ENCODE measurements at regions of chr6 and their contacts with region 1.

Region 1: DNA sequence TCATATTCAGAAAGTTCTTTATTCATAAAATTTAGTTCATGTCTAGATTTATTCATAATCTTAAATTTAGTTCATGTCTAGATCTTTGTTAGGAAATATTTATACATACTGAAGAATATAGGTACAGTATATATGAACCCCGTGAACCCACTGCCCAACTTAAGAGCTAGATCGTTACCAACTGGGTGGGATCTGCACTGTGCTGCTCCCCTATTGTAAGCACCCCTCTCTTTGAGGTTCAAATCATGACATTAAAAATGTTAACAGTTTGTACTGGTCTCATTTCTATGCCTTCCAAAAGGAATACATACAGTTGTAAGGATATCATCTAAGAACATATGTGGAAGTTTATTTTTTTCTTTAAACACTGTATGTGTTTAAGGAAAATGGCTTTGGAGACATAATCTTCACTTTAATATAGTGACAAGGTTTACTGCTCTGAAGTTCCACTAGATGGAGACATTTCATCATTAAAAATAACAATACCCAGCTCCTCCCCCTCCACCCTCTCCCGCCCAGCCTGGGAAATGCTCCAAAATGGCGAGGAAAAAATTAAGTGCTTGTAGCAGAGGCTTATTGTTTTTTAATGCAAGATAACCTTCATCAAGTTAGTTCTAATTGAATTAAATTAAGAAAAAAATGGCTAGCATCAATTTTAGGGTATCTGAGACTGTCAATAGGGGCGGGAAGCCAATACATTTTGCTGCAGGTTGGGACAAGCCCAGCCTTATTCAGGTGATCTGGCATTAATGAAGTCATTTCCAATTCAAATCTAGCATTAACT is 104.1 kb upstream of the TRAF3IP2 start:
- DNase-seq: peak; percentile 73
- ATAC-seq: peak; percentile 81
- H3K4me3 Mint-ChIP-seq: no peak overlapping the region
- H3K27ac Mint-ChIP-seq: peak overlapping the region; percentile 88
- H3K4me1 Mint-ChIP-seq: peaks cover 58% of the 10 kb centered on the region
- H3K27me3 Mint-ChIP-seq: no peaks in the 10 kb centered on the region

Region 2: GRCh38 chr6:110270165-110270564 is 1439.6 kb before region 1 on chr6:
- CTCF ChIA-PET with region 1: no interaction called
- POLR2A ChIA-PET with region 1: no interaction called
- intact Hi-C with region 1: no loop called
- DNase-seq: no peak
- ATAC-seq: no peak
- H3K4me3 Mint-ChIP-seq: no peak overlapping the region
- H3K27ac Mint-ChIP-seq: no peak overlapping the region
- H3K4me1 Mint-ChIP-seq: no peaks in the 10 kb centered on the region
- H3K27me3 Mint-ChIP-seq: peaks cover 8% of the 10 kb centered on the region

Region 3: GRCh38 chr6:111533087-111533784 is 176.6 kb before region 1 on chr6:
- CTCF ChIA-PET with region 1: no interaction called
- POLR2A ChIA-PET with region 1: no interaction called
- intact Hi-C with region 1: no loop called
- DNase-seq: peak; percentile 70
- ATAC-seq: peak; percentile 96
- H3K4me3 Mint-ChIP-seq: no peak overlapping the region
- H3K27ac Mint-ChIP-seq: peak overlapping the region; percentile 59
- H3K4me1 Mint-ChIP-seq: peaks cover 39% of the 10 kb centered on the region
- H3K27me3 Mint-ChIP-seq: no peaks in the 10 kb centered on the region

Region 4: DNA sequence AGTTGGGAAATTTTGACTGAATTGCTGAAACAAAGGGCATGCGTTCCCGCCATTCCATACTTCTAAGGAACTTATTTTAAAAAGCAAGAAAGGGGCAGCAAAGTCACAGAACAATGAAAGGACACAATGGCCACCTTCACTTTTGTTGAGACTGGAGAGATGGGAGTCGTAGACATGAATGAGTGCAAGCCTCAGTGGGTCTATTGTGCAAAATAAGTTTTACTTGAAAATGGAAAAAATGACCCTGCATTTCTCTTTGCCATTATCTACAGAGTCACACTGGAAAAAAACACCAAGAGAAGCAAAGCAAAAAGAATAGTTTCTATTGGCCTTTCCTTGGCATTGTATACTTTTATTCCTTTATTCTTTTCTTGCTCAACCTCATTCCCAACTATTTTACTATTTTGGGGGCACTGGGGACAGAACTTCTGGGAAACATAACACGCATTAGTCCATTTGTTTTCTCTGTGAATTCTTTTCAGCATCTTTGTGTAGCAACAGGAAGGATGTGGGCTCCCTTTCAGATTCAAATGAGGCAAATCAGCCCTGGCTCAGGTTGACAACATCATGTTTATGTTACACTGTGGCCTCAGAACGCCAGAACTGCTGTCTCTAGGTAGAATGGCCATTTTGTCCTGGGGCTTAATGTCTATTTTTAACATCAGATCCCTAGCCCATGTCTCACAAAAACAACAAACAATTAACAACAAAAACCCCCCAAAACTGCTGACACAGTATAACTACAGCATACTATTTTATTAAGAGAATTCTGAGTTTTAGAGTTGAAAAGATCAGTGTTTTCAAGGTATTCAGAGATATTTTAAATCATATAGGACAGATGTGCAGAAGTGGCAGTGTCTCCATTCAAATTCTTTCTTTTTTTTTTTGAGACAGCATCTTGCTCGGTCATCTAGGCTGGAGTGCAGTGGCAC is 41.2 kb after region 1 on chr6:
- CTCF ChIA-PET with region 1: interaction called, 11 read pairs
- POLR2A ChIA-PET with region 1: no interaction called
- intact Hi-C with region 1: loop called in 1 of 2 experiments (anchors 5 kb)
- DNase-seq: peak; percentile 72
- ATAC-seq: peak; percentile 84
- H3K4me3 Mint-ChIP-seq: peak overlapping the region; percentile 52
- H3K27ac Mint-ChIP-seq: peak overlapping the region; percentile 90
- H3K4me1 Mint-ChIP-seq: peaks cover 92% of the 10 kb centered on the region
- H3K27me3 Mint-ChIP-seq: no peaks in the 10 kb centered on the region

Region 5: DNA sequence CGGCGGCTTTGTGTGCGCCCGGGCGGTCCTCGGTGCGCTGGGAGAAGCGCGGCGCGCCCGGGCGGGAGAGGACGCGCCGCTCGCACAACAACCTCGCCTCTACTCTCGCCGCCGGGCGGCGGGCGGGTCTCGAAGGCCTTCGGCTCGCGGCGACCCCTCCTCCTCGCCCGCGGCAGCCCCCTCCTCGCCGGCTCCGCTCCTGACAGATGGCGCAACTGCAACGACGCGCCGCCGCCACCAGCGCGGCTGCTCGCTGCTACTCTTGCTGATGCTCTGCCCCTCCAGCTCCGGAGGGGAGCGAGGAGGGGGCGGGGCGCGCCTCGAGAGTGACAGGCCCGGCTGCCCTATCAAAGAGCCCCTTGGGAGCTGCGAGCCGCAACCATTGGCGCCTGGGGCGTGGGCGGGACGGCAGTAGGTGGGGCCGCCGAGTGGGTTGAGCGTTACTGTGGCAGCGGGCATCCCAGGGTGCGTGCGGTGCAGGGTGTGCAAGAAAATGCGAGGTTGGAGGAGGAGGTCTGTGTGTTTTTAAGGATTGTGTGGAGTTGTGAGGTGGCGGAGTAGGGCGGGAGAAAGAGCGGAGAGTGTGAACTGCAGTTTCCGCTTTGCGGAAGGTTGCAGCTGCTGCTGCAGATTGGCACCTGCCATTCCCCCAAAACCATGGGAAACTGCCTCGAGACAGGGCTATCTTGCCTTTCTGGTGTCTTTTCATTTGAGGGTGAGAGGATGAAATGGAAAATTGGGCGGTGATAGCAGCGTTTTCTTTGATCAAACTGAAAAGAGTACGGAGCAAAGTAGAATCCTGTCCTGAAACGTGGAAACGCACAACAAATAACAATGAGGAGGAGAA is 163.6 kb after region 1 on chr6 and contains the start of gene FYN:
- CTCF ChIA-PET with region 1: interaction called, 9 read pairs
- POLR2A ChIA-PET with region 1: no interaction called
- intact Hi-C with region 1: loop called (anchors 1 to 2 kb)
- DNase-seq: peak; percentile 100
- ATAC-seq: peak; percentile 87
- H3K4me3 Mint-ChIP-seq: peak within 1 kb of the TSS; percentile 98
- H3K27ac Mint-ChIP-seq: peak within 1 kb of the TSS; percentile 91
- H3K4me1 Mint-ChIP-seq: peaks cover 35% of the 10 kb centered on the region
- H3K27me3 Mint-ChIP-seq: no peaks in the 10 kb centered on the region
- total RNA-seq, gene FYN: 345 to 504 TPM

Region 6: GRCh38 chr6:112029045-112029822 is 319.4 kb after region 1 on chr6:
- CTCF ChIA-PET with region 1: interaction called, 15 read pairs
- POLR2A ChIA-PET with region 1: no interaction called
- intact Hi-C with region 1: loop called in 1 of 2 experiments (anchors 1 kb)
- DNase-seq: peak; percentile 90
- ATAC-seq: peak; percentile 20
- H3K4me3 Mint-ChIP-seq: no peak overlapping the region
- H3K27ac Mint-ChIP-seq: peak overlapping the region; percentile 87
- H3K4me1 Mint-ChIP-seq: peaks cover 76% of the 10 kb centered on the region
- H3K27me3 Mint-ChIP-seq: no peaks in the 10 kb centered on the region

Measured in activated CD4-positive, alpha-beta T cell treated with anti-CD3 and anti-CD28 coated beads for 36 hours (primary cell).